ENCODE measurements at regions of chr1 and their contacts with region 1.

Region 1: DNA sequence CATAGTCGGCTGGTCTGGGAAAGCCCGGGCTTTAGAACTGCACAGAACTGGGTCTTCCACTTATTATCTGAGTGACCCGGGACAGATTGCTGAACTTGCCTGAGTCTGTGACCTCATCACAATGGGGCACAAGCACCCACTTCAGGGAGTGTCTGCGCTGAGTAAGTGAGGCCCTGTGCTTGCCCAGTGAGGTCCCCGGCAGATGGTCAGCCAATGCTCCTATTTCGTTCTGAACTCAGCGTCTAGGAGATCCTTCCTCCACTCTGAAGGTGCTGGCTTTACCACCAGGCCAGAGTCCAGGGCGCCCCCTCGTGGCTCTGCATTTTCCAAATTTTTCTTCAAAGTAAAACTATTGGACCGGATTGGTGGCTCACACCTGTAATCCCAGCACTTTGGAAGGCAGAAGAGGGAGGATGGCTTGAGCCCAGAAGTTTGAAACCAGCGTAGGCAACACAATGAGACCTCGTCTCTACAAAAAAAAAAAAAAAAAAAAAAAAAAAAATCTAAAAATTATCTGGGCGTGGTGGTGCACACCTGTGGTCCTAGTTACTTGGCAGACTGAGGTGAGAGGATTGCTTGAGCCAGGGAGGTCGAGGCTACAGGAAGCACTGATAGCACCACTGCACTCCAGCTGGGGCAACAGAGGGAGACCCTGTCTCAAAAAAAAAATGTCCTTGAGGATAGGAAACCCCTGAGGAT is 61.7 kb downstream of the FCRL5 start:
- DNase-seq: peak; percentile 73
- H3K4me3 ChIP-seq: no peak overlapping the region
- H3K27ac ChIP-seq: no peak overlapping the region
- H3K4me1 ChIP-seq: peaks cover 11% of the 10 kb centered on the region
- CTCF ChIP-seq: peak; percentile 80

Region 2: GRCh38 chr1:157170677-157171515 is 319.7 kb before region 1 on chr1:
- CTCF ChIA-PET with region 1: no interaction called
- POLR2A ChIA-PET with region 1: no interaction called
- intact Hi-C with region 1: loop called (anchors 10 kb)
- DNase-seq: peak; percentile 62
- H3K4me3 ChIP-seq: no peak overlapping the region
- H3K27ac ChIP-seq: no peak overlapping the region
- H3K4me1 ChIP-seq: peaks cover 30% of the 10 kb centered on the region
- CTCF ChIP-seq: peak; percentile 83

Region 3: GRCh38 chr1:157193702-157194391 is 296.8 kb before region 1 on chr1:
- CTCF ChIA-PET with region 1: no interaction called
- POLR2A ChIA-PET with region 1: no interaction called
- intact Hi-C with region 1: loop called (anchors 2 kb)
- DNase-seq: peak; percentile 62
- H3K4me3 ChIP-seq: no peak overlapping the region
- H3K27ac ChIP-seq: no peak overlapping the region
- H3K4me1 ChIP-seq: no peaks in the 10 kb centered on the region
- CTCF ChIP-seq: peak; percentile 97

Region 4: GRCh38 chr1:157380523-157380922 is 110.1 kb before region 1 on chr1:
- CTCF ChIA-PET with region 1: no interaction called
- POLR2A ChIA-PET with region 1: no interaction called
- intact Hi-C with region 1: loop called (anchors 1 kb)
- DNase-seq: no peak
- H3K4me3 ChIP-seq: no peak overlapping the region
- H3K27ac ChIP-seq: no peak overlapping the region
- H3K4me1 ChIP-seq: no peaks in the 10 kb centered on the region
- CTCF ChIP-seq: no peak

Region 5: GRCh38 chr1:157399984-157400382 is 90.6 kb before region 1 on chr1:
- CTCF ChIA-PET with region 1: no interaction called
- POLR2A ChIA-PET with region 1: no interaction called
- intact Hi-C with region 1: no loop called
- DNase-seq: no peak
- H3K4me3 ChIP-seq: no peak overlapping the region
- H3K27ac ChIP-seq: no peak overlapping the region
- H3K4me1 ChIP-seq: peaks cover 14% of the 10 kb centered on the region
- CTCF ChIP-seq: no peak